Naive thymus-derived CD4-positive, alpha-beta T cell (primary cell): ENCODE measurements at regions of chr9 and their contacts with region 1.

Region 1: DNA sequence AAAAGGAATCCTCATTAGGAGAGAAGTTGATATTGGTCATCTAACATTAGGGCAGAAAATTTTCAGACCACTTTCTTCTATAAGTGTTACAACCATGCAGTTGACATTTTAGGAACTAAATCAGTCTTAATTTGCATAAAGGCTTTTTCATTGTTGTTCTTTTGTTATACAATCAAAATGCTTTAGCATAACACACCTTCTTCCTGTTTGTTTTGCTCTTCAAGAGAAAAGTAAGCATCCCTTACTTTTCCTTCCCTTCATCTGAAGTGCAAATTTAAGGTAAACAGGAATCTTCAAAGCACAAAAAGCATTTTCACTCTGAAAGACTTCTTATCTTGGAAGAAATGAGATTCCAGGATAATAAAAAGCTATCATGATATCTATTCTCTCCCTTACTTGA is 273.6 kb downstream of the PTPRD start:
- DNase-seq: no peak
- ATAC-seq: no peak
- H3K4me3 ChIP-seq: no peak overlapping the region
- H3K4me3 Mint-ChIP-seq: no peak overlapping the region
- H3K27ac ChIP-seq: no peak overlapping the region
- H3K27ac Mint-ChIP-seq: no peak overlapping the region
- H3K4me1 ChIP-seq: no peaks in the 10 kb centered on the region
- H3K4me1 Mint-ChIP-seq: no peaks in the 10 kb centered on the region
- H3K27me3 ChIP-seq: no peaks in the 10 kb centered on the region
- H3K27me3 Mint-ChIP-seq: no peaks in the 10 kb centered on the region

Region 2: GRCh38 chr9:10282084-10282483 is 57.1 kb before region 1 on chr9:
- CTCF ChIA-PET with region 1: no interaction called
- POLR2A ChIA-PET with region 1: no interaction called
- intact Hi-C with region 1: loop called in 1 of 2 experiments (anchors 5 kb)
- DNase-seq: no peak
- ATAC-seq: no peak
- H3K4me3 ChIP-seq: no peak overlapping the region
- H3K4me3 Mint-ChIP-seq: no peak overlapping the region
- H3K27ac ChIP-seq: no peak overlapping the region
- H3K27ac Mint-ChIP-seq: no peak overlapping the region
- H3K4me1 ChIP-seq: no peaks in the 10 kb centered on the region
- H3K4me1 Mint-ChIP-seq: no peaks in the 10 kb centered on the region
- H3K27me3 ChIP-seq: no peaks in the 10 kb centered on the region
- H3K27me3 Mint-ChIP-seq: no peaks in the 10 kb centered on the region